HAP-1 (cell line): ENCODE measurements at regions of chr15 and their contacts with region 1.

Region 1: DNA sequence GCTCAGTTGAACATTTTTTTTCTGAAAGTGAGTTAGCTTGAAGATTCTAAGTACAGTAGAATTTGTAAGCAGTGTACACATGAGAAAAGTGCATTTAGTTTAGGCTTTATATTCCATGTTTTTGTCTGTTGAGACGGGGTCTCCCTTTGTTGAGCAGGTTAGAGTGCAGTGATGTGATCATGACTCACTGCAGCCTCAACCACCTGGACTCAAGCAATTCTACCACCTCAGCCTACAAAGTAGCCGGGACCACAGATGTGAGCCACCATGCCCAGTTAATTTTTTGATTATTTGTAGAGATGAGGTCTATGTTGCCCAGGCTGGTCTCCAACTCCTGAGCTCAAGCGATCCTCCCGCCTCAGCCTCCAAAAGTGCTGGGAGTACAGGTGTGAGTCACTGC is 5.3 kb upstream of the CSNK1G1 start:
- DNase-seq: no peak
- H3K4me3 ChIP-seq: no peak overlapping the region
- H3K4me1 ChIP-seq: peaks cover 7% of the 10 kb centered on the region
- H3K27me3 ChIP-seq: no peaks in the 10 kb centered on the region

Region 2: GRCh38 chr15:63487076-63487757 is 874.0 kb before region 1 on chr15:
- in situ Hi-C with region 1: no loop called
- DNase-seq: peak; percentile 90 to 98
- H3K4me3 ChIP-seq: no peak overlapping the region
- H3K4me1 ChIP-seq: peaks cover 20% of the 10 kb centered on the region
- H3K27me3 ChIP-seq: peaks cover 10% of the 10 kb centered on the region

Region 3: GRCh38 chr15:64209680-64210334 is 151.5 kb before region 1 on chr15:
- in situ Hi-C with region 1: loop called (anchors 5 kb)
- DNase-seq: peak in 1 of 2 experiments; percentile 87
- H3K4me3 ChIP-seq: no peak overlapping the region
- H3K4me1 ChIP-seq: peaks cover 3% of the 10 kb centered on the region; the same call in 1 of the 2 replicates
- H3K27me3 ChIP-seq: no peaks in the 10 kb centered on the region

Region 4: DNA sequence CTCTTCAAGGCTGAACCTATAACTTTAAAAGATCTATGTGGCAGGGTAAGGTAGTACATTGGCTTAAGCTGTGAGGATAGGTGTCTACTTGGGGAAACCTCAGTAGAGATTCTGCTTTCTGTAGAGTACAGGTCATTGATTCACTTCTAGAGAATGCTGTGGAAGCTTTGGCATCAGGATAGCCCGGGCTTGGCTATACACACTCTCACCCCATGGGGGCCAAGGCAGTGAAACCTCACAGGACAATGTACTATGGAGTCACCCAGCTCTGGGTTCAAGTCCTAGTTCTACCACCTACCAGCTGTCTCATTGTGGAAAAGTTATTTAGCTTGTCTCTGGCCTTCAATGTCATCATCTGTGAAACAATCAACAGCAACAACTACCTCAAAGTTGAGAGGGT is 659.2 kb after region 1 on chr15:
- in situ Hi-C with region 1: no loop called
- DNase-seq: no peak
- H3K4me3 ChIP-seq: no peak overlapping the region
- H3K4me1 ChIP-seq: no peaks in the 10 kb centered on the region
- H3K27me3 ChIP-seq: no peaks in the 10 kb centered on the region